WTC11 (cell line): ENCODE measurements at regions of chr11 and their contacts with region 1.

Region 1: DNA sequence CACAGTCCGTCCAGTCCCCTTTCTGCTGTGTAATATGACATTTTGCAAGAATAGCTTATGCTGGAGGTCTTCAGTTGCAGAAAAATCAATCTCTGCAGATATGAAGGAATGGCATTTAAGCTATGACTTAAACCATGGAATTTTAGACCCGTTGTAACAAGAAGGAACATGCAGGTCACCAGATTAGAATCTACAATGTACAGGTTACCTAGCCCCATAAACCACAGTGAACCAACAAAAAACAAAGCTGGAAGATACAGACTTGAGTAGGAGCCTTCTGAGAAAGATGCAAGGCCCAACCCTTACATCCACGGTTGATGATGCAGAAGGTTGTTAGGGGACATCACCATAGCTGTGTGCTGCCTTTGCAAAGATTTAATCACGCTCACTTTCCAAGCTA is 132.5 kb downstream of the WT1 start:
- DNase-seq: no peak
- ATAC-seq: no peak
- H3K4me3 Mint-ChIP-seq: no peak overlapping the region
- H3K27ac Mint-ChIP-seq: no peak overlapping the region
- H3K4me1 Mint-ChIP-seq: peaks cover 5% of the 10 kb centered on the region; the same call in 1 of the 2 replicates
- H3K27me3 Mint-ChIP-seq: no peaks in the 10 kb centered on the region
- CTCF ChIP-seq: no peak

Region 2: GRCh38 chr11:32288276-32288675 is 14.5 kb before region 1 on chr11:
- CTCF ChIA-PET with region 1: interaction called, 16 read pairs
- POLR2A ChIA-PET with region 1: no interaction called
- DNase-seq: peak; percentile 12
- ATAC-seq: peak; percentile 92
- H3K4me3 Mint-ChIP-seq: no peak overlapping the region
- H3K27ac Mint-ChIP-seq: no peak overlapping the region
- H3K4me1 Mint-ChIP-seq: peaks cover 4% of the 10 kb centered on the region; the same call in 1 of the 2 replicates
- H3K27me3 Mint-ChIP-seq: peaks cover 8% of the 10 kb centered on the region
- CTCF ChIP-seq: peak; percentile 34; the same call in 1 of the 2 replicates

Region 3: GRCh38 chr11:32312865-32313403 is 10.1 kb after region 1 on chr11:
- CTCF ChIA-PET with region 1: interaction called, 22 read pairs
- POLR2A ChIA-PET with region 1: no interaction called
- DNase-seq: peak; percentile 39
- ATAC-seq: peak; percentile 86
- H3K4me3 Mint-ChIP-seq: peak overlapping the region; percentile 9; the same call in 1 of the 2 replicates
- H3K27ac Mint-ChIP-seq: no peak overlapping the region
- H3K4me1 Mint-ChIP-seq: peaks cover 19% of the 10 kb centered on the region
- H3K27me3 Mint-ChIP-seq: no peaks in the 10 kb centered on the region; the same call in 1 of the 2 replicates
- CTCF ChIP-seq: peak; percentile 54; the same call in 1 of the 2 replicates